Heart left ventricle (tissue), 16 donors: ENCODE measurements at regions of chr15 and their contacts with region 1.

Region 1: GRCh38 chr15:29410338-29410737 is 140.7 kb upstream of the NSMCE3 start:
- DNase-seq: no peak
- ATAC-seq: no peak
- H3K4me3 ChIP-seq: no peak overlapping the region
- H3K27ac ChIP-seq: no peak overlapping the region
- H3K4me1 ChIP-seq: no peaks in the 10 kb centered on the region
- H3K27me3 ChIP-seq: peaks cover 0 to 4% (median 0%) of the 10 kb centered on the region in 9 donors
- CTCF ChIP-seq: no peak
- POLR2A ChIP-seq: no peak

Region 2: GRCh38 chr15:29348336-29348914 is 61.9 kb before region 1 on chr15:
- intact Hi-C with region 1: no loop called
- DNase-seq: no peak
- ATAC-seq: no peak
- H3K4me3 ChIP-seq: no peak overlapping the region
- H3K27ac ChIP-seq: peak overlapping the region in 1 of 12 donors; percentile 69
- H3K4me1 ChIP-seq: no peaks in the 10 kb centered on the region
- H3K27me3 ChIP-seq: peaks cover 0 to 12% (median 0%) of the 10 kb centered on the region in 9 donors
- CTCF ChIP-seq: no peak
- POLR2A ChIP-seq: no peak

Region 3: GRCh38 chr15:29470311-29471193 is 60.2 kb after region 1 on chr15:
- intact Hi-C with region 1: loop called in 1 of 10 experiments (anchors 10 kb)
- DNase-seq: no peak
- ATAC-seq: no peak
- H3K4me3 ChIP-seq: no peak overlapping the region
- H3K27ac ChIP-seq: no peak overlapping the region
- H3K4me1 ChIP-seq: no peaks in the 10 kb centered on the region
- H3K27me3 ChIP-seq: no peaks in the 10 kb centered on the region
- CTCF ChIP-seq: no peak
- POLR2A ChIP-seq: no peak

Region 4: DNA sequence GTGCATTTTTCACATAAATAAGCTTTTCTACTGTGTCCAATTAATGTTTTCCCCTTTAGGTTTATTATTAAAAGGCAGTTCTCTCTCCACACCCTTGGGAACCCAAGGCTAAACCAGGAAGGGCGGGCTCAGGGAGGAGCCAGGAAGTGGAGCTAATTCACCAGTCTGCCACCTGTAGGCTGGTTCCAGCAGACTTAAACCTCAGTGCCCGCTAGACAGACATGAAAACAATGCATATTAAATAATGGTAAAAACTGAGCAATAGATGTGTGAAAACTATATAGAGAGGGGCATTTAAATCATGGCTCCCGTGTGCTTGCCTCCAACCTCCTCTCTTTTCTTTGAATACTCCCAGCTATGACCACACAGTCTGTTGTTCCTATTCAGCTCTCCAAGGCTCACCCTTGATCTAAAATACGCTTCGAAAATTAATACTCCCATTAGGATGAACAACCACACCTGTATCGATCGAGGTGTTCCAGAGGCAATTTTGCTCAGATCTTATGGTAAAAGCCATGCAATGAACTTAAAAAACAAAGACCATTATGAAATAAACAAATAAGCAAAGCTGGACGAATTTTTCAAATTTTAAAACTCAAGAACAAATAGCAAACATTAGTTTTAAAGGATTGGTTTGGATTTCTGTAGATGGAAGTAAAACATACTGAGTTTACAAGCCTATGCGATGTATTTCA is 158.6 kb after region 1 on chr15:
- intact Hi-C with region 1: no loop called
- DNase-seq: peak in 1 of 5 donors; percentile 37
- ATAC-seq: peak in 2 of 4 donors; percentile 55 to 68
- H3K4me3 ChIP-seq: no peak overlapping the region
- H3K27ac ChIP-seq: no peak overlapping the region
- H3K4me1 ChIP-seq: peaks cover 0 to 28% (median 7%) of the 10 kb centered on the region in 12 donors
- H3K27me3 ChIP-seq: peaks cover 25 to 81% (median 47%) of the 10 kb centered on the region in 9 donors
- CTCF ChIP-seq: peak in 7 of 12 donors; percentile 9 to 36 (median 18)
- POLR2A ChIP-seq: no peak